Right lobe of liver (tissue), 6 donors: ENCODE measurements at regions of chr19 and their contacts with region 1.

Region 1: GRCh38 chr19:6530386-6531161 is at the start of gene TNFSF9:
- DNase-seq: peak; percentile 82 to 91 (median 87)
- ATAC-seq: peak; percentile 90 to 98 (median 96)
- H3K4me3 ChIP-seq: peak within 1 kb of the TSS; percentile 35 to 69 (median 46)
- H3K27ac ChIP-seq: peak within 1 kb of the TSS in 2 of 3 donors; percentile 50
- H3K4me1 ChIP-seq: peaks cover 0 to 8% (median 0%) of the 10 kb centered on the region in 4 donors
- H3K27me3 ChIP-seq: no peaks in the 10 kb centered on the region
- CTCF ChIP-seq: no peak
- POLR2A ChIP-seq: peak; percentile 91
- total RNA-seq, gene TNFSF9: 0.27 to 1.6 (median 0.55) TPM in 3 of 6 experiments, not detected in the others

Region 2: DNA sequence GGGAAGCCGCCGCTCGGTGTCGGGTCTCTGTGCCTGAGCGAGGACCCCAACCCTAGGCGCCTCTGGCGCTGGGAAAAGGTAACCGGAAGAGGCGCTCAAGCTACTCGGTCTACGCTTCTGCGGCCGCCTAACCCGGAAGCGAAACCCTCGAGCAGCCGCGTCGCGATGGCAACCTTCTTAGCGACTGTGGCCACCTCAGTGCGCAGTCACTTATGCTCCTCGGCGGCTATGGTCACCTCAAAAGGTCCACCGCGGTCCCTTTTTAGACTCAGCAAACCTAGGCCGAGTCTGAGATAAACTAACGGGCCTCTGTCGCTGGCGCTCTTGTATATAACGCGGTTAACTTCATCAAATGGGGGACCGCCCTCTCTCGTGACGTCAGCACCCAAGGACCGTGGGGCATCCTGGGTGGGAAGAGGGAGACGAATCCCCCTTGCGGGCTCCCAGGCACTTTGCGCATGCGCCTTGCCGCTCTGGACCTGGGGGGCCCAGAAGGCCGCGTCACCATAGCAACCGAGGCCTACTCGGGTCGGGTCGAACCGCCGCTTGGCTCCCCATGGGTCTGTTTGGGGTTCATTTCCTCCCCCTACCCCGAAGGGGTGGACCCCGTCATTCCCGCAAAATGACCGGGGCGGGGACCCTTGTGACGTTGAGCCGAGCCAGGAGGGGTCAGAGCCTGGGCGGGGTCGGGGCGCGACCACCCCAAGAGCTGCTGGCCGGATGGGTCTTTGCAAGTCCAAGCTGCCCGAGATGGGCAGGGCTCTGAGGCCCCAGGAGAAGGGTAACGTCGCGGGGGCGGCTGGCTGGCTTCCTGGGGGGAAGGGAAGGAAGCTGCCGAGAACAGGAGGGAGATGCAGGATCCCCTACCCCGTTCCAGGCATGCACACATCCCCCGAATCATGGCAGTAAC is 137.2 kb before region 1 on chr19 and contains the start of gene GTF2F1:
- intact Hi-C with region 1: no loop called
- DNase-seq: peak; percentile 89 to 94 (median 91)
- ATAC-seq: peak; percentile 90 to 94 (median 92)
- H3K4me3 ChIP-seq: peak within 1 kb of the TSS; percentile 80 to 89 (median 81)
- H3K27ac ChIP-seq: peak within 1 kb of the TSS; percentile 72 to 88 (median 85)
- H3K4me1 ChIP-seq: peaks cover 0 to 7% (median 3%) of the 10 kb centered on the region in 4 donors
- H3K27me3 ChIP-seq: no peaks in the 10 kb centered on the region
- CTCF ChIP-seq: peak in 2 of 4 donors; percentile 23 to 32
- POLR2A ChIP-seq: no peak
- total RNA-seq, gene GTF2F1: 12.8 to 22.7 (median 19.8) TPM

Region 3: GRCh38 chr19:6610934-6611852 is 80.6 kb after region 1 on chr19:
- intact Hi-C with region 1: loop called in 1 of 2 experiments (anchors 10 kb)
- DNase-seq: no peak
- ATAC-seq: no peak
- H3K4me3 ChIP-seq: no peak overlapping the region
- H3K27ac ChIP-seq: no peak overlapping the region
- H3K4me1 ChIP-seq: no peaks in the 10 kb centered on the region
- H3K27me3 ChIP-seq: no peaks in the 10 kb centered on the region
- CTCF ChIP-seq: no peak
- POLR2A ChIP-seq: no peak

Region 4: GRCh38 chr19:6639439-6639838 is 108.9 kb after region 1 on chr19:
- intact Hi-C with region 1: no loop called
- DNase-seq: no peak
- ATAC-seq: peak in 1 of 4 donors; percentile 22
- H3K4me3 ChIP-seq: no peak overlapping the region
- H3K27ac ChIP-seq: no peak overlapping the region
- H3K4me1 ChIP-seq: no peaks in the 10 kb centered on the region
- H3K27me3 ChIP-seq: no peaks in the 10 kb centered on the region
- CTCF ChIP-seq: no peak
- POLR2A ChIP-seq: no peak

Region 5: DNA sequence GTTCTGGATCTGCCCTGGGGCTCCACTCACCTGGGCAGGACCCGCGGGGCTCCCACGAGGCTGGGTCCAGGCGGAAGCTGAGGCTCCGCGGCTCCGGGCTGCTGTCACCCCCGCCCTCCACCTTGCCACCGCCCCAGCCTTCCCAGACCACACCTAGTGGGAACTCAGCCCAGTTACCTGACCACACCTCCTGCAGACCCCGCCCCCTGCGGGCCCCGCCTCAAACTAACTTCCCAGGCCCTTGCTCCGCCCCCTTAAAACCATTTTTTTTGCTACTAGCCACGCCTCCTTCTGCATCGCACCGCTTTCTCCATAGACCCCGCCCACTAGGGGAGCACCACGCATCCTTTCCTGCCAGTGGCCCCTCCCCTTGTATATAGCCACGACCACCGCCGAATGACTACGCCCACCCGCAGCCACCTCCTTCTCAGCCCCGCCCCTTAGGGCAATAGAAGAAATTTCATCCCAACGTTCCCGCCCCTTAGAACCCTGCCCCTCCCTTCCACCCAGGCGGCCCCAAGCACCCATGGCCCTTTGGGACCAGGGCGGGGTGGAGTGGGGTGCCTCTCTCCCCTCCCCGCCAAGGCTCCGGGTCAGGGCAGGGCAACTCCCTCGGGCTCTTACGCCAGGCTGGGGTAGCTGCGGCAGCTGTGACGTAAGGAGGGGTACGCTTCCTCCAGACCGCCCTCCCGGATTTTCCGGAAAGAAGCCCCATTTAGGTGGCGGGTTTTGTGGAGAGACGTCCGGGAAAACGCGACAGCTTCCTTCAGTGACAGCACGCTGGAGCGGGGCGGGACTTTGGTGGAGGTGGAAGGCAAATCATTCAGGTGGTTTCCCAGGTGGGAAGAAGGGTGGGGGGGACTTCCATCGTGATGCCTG is 237.0 kb after region 1 on chr19 and contains the start of gene SH2D3A:
- intact Hi-C with region 1: no loop called
- DNase-seq: peak; percentile 85 to 93 (median 88)
- ATAC-seq: peak; percentile 89 to 92 (median 90)
- H3K4me3 ChIP-seq: peak within 1 kb of the TSS; percentile 19 to 54 (median 27)
- H3K27ac ChIP-seq: peak within 1 kb of the TSS in 1 of 3 donors; percentile 30
- H3K4me1 ChIP-seq: peaks cover 0 to 29% (median 5%) of the 10 kb centered on the region in 4 donors
- H3K27me3 ChIP-seq: no peaks in the 10 kb centered on the region
- CTCF ChIP-seq: no peak
- POLR2A ChIP-seq: peak; percentile 37
- total RNA-seq, gene SH2D3A: 0.72 to 2.3 (median 1.3) TPM